ENCODE measurements at regions of chr18 and their contacts with region 1.

Region 1: GRCh38 chr18:6382963-6383362 is 31.7 kb downstream of the L3MBTL4 start:
- DNase-seq: no peak
- ATAC-seq: no peak
- H3K4me3 ChIP-seq: no peak overlapping the region
- H3K27ac ChIP-seq: no peak overlapping the region
- H3K4me1 ChIP-seq: no peaks in the 10 kb centered on the region
- H3K27me3 ChIP-seq: no peaks in the 10 kb centered on the region
- CTCF ChIP-seq: no peak
- POLR2A ChIP-seq: no peak

Region 2: GRCh38 chr18:4510711-4511110 is 1872.3 kb before region 1 on chr18:
- in situ Hi-C with region 1: no loop called
- intact Hi-C with region 1: no loop called
- DNase-seq: no peak
- ATAC-seq: no peak
- H3K4me3 ChIP-seq: no peak overlapping the region
- H3K27ac ChIP-seq: no peak overlapping the region
- H3K4me1 ChIP-seq: no peaks in the 10 kb centered on the region
- H3K27me3 ChIP-seq: no peaks in the 10 kb centered on the region
- CTCF ChIP-seq: no peak
- POLR2A ChIP-seq: no peak

Region 3: DNA sequence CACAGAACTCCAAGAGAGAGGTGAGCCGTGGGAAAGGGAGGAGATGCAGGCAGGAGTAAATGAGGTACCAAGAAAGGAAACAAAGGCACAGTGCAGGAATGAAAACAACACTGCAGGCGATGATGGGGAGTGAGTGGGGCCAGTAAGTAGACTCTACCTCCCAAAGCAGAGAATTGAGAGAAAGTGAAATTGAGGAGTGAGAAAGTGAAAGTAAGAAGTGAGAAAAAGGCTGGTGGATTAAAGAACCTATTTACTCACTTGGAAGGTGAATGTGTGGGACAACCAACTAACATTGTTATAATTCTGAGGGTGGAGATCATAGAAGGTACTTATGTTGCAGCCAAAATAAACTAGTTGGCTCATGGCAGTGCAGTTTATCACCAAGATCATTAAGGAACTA is 294.5 kb before region 1 on chr18:
- in situ Hi-C with region 1: no loop called
- intact Hi-C with region 1: no loop called
- DNase-seq: no peak
- ATAC-seq: no peak
- H3K4me3 ChIP-seq: no peak overlapping the region
- H3K27ac ChIP-seq: no peak overlapping the region
- H3K4me1 ChIP-seq: no peaks in the 10 kb centered on the region
- H3K27me3 ChIP-seq: no peaks in the 10 kb centered on the region
- CTCF ChIP-seq: no peak
- POLR2A ChIP-seq: no peak

Region 4: GRCh38 chr18:6270771-6271216 is 112.2 kb before region 1 on chr18:
- in situ Hi-C with region 1: loop called in 1 of 4 experiments (anchors 25 kb)
- intact Hi-C with region 1: no loop called
- DNase-seq: no peak
- ATAC-seq: no peak
- H3K4me3 ChIP-seq: no peak overlapping the region
- H3K27ac ChIP-seq: no peak overlapping the region
- H3K4me1 ChIP-seq: no peaks in the 10 kb centered on the region
- H3K27me3 ChIP-seq: no peaks in the 10 kb centered on the region
- CTCF ChIP-seq: no peak
- POLR2A ChIP-seq: no peak

Region 5: GRCh38 chr18:6495536-6495935 is 112.6 kb after region 1 on chr18:
- in situ Hi-C with region 1: no loop called
- intact Hi-C with region 1: no loop called
- DNase-seq: no peak
- ATAC-seq: no peak
- H3K4me3 ChIP-seq: no peak overlapping the region
- H3K27ac ChIP-seq: no peak overlapping the region
- H3K4me1 ChIP-seq: no peaks in the 10 kb centered on the region
- H3K27me3 ChIP-seq: no peaks in the 10 kb centered on the region
- CTCF ChIP-seq: no peak
- POLR2A ChIP-seq: no peak